ENCODE measurements at regions of chr17 and their contacts with region 1.

Region 1: GRCh38 chr17:66799849-66800537 is 34.9 kb upstream of the CACNG5 start:
- DNase-seq: no peak
- H3K4me3 ChIP-seq: no peak overlapping the region
- CTCF ChIP-seq: no peak
- POLR2A ChIP-seq: no peak

Region 2: DNA sequence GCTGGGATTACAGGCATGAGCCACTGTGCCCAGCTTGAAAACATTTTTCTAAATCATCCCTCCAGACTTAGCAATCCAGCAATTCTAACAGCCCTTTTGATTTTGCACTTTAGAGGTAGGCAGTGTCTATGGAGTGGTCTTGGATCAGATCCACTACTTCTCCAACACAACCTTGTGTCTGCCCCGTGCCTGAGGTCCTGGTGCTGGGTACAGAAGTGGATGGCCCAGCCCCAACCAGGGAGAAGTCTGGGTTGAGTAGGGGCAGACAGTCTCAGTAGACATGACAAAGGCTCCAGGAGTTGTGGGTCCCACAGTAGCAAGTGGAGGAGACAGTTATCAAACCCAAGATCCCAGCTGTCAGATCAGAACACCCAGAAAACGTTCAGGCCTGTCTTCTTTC is 36.9 kb before region 1 on chr17:
- intact Hi-C with region 1: loop called (anchors 1 kb)
- DNase-seq: no peak
- H3K4me3 ChIP-seq: no peak overlapping the region
- CTCF ChIP-seq: no peak
- POLR2A ChIP-seq: no peak

Measured in lower leg skin (tissue), 4 donors.